Endothelial cell of umbilical vein (primary cell): ENCODE measurements at regions of chr14 and their contacts with region 1.

Region 1: GRCh38 chr14:49971156-49972130 is 78.6 kb downstream of the ARF6 start:
- DNase-seq: peak; percentile 51
- H3K4me3 ChIP-seq: no peak overlapping the region
- H3K27ac ChIP-seq: peak overlapping the region; percentile 75
- H3K4me1 ChIP-seq: peaks cover 50% of the 10 kb centered on the region
- H3K27me3 ChIP-seq: no peaks in the 10 kb centered on the region
- CTCF ChIP-seq: no peak
- POLR2A ChIP-seq: no peak

Region 2: DNA sequence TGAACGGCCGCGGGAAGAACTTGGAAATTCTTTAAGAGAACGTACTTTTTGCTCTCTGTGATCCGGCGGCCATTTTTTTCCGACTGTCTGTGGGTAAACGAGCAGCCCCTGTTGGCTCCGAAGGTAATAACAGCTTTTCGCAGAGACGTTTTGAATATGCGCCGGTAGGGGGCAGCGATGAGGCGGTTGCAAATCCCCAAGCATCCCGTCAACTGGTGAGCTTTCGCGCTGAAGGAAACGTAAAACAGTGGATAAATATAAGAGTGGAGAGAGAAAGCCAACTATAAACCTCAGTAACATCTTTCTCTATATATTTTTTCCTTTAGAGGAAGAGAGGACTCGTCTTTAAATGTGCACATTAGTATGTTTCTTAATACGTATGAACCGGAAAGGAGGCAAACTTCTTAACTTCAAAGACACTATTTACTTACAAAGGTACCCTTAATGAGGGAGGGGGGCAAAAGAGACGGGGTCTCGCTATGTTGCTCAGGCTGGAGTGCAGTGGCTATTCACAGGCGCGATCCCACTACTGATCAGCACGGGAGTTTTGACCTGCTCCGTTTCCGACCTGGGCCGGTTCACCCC is 109.3 kb before region 1 on chr14:
- CTCF ChIA-PET with region 1: interaction called, 19 read pairs
- POLR2A ChIA-PET with region 1: no interaction called
- dilution Hi-C with region 1: no loop called
- intact Hi-C with region 1: no loop called
- DNase-seq: peak; percentile 93
- H3K4me3 ChIP-seq: peak overlapping the region; percentile 59 to 91 (median 73)
- H3K27ac ChIP-seq: peak overlapping the region; percentile 77
- H3K4me1 ChIP-seq: peaks cover 15% of the 10 kb centered on the region
- H3K27me3 ChIP-seq: no peaks in the 10 kb centered on the region
- CTCF ChIP-seq: peak; percentile 100
- POLR2A ChIP-seq: no peak

Region 3: GRCh38 chr14:49908432-49908781 is 63.0 kb before region 1 on chr14:
- CTCF ChIA-PET with region 1: interaction called, 14 read pairs
- POLR2A ChIA-PET with region 1: no interaction called
- dilution Hi-C with region 1: no loop called
- intact Hi-C with region 1: no loop called
- DNase-seq: no peak
- H3K4me3 ChIP-seq: no peak overlapping the region
- H3K27ac ChIP-seq: peak overlapping the region; percentile 96
- H3K4me1 ChIP-seq: peaks cover 36% of the 10 kb centered on the region
- H3K27me3 ChIP-seq: no peaks in the 10 kb centered on the region
- CTCF ChIP-seq: no peak
- POLR2A ChIP-seq: no peak

Region 4: DNA sequence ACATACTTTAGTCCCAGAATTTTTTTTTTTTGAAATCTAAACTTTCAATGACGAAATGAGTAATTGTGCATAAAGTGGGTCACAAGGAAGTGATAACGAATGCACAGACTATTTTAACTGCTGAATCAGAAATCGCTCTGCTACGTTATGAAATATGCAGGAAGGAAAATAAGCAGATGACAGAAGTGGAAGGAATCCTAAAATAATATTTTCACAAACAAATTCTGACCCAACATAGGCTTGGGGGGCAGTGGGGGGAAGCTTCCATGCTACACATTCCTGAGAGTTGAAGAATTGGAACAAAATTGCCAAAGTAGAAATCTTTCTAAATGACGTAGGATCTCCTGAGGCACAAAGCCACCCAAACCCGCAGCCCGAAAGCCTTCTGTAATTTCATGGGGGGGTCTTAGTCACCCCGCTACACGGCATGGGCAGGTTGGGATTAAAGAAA is 11.1 kb after region 1 on chr14:
- CTCF ChIA-PET with region 1: interaction called, 3 read pairs
- POLR2A ChIA-PET with region 1: no interaction called
- dilution Hi-C with region 1: no loop called
- intact Hi-C with region 1: loop called (anchors 1 kb)
- DNase-seq: peak; percentile 87
- H3K4me3 ChIP-seq: peak overlapping the region in 2 of 3 experiments; percentile 1 to 61
- H3K27ac ChIP-seq: peak overlapping the region; percentile 89
- H3K4me1 ChIP-seq: peaks cover 15% of the 10 kb centered on the region
- H3K27me3 ChIP-seq: no peaks in the 10 kb centered on the region
- CTCF ChIP-seq: no peak
- POLR2A ChIP-seq: no peak

Region 5: DNA sequence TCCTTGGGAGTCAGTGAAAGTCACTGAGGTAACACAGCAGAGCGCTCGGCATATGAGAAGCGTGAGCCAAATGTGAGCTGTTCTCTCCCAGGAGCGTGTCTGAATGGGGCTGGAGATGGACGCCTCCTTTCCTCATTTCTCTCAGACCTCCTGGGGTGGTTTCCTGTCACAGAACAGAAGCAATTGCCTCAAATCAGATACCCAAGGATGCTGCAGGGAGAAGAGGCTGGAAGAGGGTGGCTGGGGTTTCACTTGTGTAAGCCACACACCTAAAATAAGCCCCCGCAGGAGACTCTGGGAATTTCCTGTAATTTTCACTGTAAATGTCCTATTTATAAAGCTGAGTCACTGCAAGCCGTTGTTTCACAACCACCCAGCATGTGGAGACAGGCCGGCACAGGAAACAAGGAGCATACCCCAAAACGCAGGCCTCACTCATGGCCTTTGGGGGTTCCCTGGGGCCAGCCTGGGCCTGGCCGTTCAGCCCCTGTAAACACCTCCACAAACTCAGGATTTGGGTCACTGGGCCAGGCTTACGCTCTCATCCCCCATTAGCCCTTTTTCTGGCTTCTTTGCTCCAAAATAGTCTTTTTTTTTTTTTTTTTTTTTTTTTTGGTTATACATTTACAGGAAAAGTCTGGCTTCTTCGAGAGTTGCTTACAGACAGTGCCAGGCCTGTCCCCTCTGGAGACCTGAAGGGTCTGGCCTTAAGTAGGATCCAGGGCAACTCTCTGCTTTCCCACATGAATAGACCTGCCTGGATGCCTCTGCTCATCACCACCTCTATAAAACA is 89.6 kb after region 1 on chr14:
- CTCF ChIA-PET with region 1: interaction called, 9 read pairs
- POLR2A ChIA-PET with region 1: no interaction called
- dilution Hi-C with region 1: no loop called
- intact Hi-C with region 1: loop called (anchors 2 kb)
- DNase-seq: peak; percentile 82
- H3K4me3 ChIP-seq: no peak overlapping the region
- H3K27ac ChIP-seq: peak overlapping the region; percentile 88
- H3K4me1 ChIP-seq: peaks cover 31% of the 10 kb centered on the region
- H3K27me3 ChIP-seq: no peaks in the 10 kb centered on the region
- CTCF ChIP-seq: peak in 1 of 2 donors; percentile 4
- POLR2A ChIP-seq: no peak